ENCODE measurements at regions of chrX and their contacts with region 1.

Region 1: DNA sequence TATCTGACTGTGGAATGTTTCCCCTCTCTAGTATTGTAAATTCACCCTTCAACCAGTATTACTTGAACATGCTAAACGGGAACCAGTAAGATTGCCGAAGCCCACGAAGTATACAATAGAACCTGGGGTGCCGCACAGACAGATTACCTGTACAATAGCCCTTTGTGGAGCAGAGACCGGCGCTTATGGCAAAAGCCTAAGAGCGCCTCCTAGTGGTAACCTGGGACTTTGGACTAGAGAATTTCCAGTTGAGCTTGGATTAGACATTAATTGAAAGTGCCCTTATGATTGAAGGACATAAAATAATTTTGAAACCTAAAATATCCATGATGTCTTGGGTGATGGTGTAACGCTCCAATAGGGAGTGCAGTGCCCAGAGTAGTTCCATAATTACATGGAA is 14.1 kb downstream of the ZNF157 start:
- DNase-seq: peak; percentile 41 to 84 (median 69)
- ATAC-seq: peak; percentile 49
- H3K4me3 ChIP-seq: no peak overlapping the region
- H3K4me3 Mint-ChIP-seq: peak overlapping the region; percentile 35
- H3K27ac ChIP-seq: no peak overlapping the region
- H3K27ac Mint-ChIP-seq: peak overlapping the region; percentile 81
- H3K4me1 ChIP-seq: peaks cover 22% of the 10 kb centered on the region
- H3K4me1 Mint-ChIP-seq: peaks cover 23% of the 10 kb centered on the region
- H3K27me3 ChIP-seq: no peaks in the 10 kb centered on the region
- H3K27me3 Mint-ChIP-seq: no peaks in the 10 kb centered on the region
- CTCF ChIP-seq: peak; percentile 63

Region 2: DNA sequence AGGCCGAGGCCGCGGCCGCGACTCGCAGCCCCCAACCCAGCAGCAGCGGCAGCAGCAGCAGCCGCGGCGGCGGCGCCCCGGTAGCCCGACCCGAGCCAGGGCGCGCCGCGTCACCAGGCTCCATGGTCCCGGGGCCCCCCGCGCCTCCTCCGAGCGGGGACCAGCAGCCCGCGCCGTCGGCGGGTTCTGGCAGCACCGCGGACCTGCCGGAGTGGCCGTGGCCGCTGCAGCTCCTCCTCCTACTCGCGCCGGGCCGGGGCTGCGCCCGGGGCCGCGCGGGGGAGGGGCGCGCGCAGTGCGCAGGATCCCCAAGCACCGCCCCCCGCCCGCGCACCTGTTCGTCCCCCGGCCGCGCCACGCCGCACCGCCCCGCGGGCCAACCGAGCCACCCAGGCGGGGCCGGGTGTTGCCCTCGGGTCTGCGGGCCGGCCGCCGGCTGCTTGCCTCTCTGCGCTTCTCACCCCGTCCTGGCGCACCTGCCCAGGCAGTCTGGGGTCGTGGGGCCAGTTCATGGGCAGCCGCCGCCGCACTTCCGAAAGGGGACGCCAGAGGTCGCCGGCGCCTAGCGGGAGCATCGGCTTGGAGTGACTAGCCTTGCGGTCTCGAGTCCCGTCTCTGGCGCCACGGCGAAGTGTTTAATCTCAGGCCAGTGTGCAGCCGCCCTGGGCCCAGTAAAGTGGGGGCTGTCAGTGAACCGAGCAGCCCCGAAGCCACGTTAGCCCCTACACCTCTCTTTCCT is 625.4 kb before region 1 on chrX and contains the start of gene SLC9A7:
- CTCF ChIA-PET with region 1: no interaction called
- POLR2A ChIA-PET with region 1: no interaction called
- intact Hi-C with region 1: loop called in 1 of 2 experiments (anchors 5 kb)
- DNase-seq: peak; percentile 56 to 86 (median 76)
- ATAC-seq: peak; percentile 84
- H3K4me3 ChIP-seq: peak within 1 kb of the TSS; percentile 52 to 67
- H3K4me3 Mint-ChIP-seq: peak within 1 kb of the TSS; percentile 90
- H3K27ac ChIP-seq: no peak within 1 kb of the TSS
- H3K27ac Mint-ChIP-seq: peak within 1 kb of the TSS; percentile 69
- H3K4me1 ChIP-seq: peaks cover 14% of the 10 kb centered on the region
- H3K4me1 Mint-ChIP-seq: peaks cover 11% of the 10 kb centered on the region
- H3K27me3 ChIP-seq: no peaks in the 10 kb centered on the region
- H3K27me3 Mint-ChIP-seq: peaks cover 8% of the 10 kb centered on the region
- CTCF ChIP-seq: peak; percentile 63
- total RNA-seq, gene SLC9A7: 2.4 to 2.5 TPM

Region 3: GRCh38 chrX:47166126-47166525 is 218.4 kb before region 1 on chrX:
- CTCF ChIA-PET with region 1: no interaction called
- POLR2A ChIA-PET with region 1: no interaction called
- intact Hi-C with region 1: no loop called
- DNase-seq: peak in 1 of 9 experiments; percentile 9
- ATAC-seq: no peak
- H3K4me3 ChIP-seq: no peak overlapping the region
- H3K4me3 Mint-ChIP-seq: no peak overlapping the region
- H3K27ac ChIP-seq: no peak overlapping the region
- H3K27ac Mint-ChIP-seq: no peak overlapping the region
- H3K4me1 ChIP-seq: no peaks in the 10 kb centered on the region
- H3K4me1 Mint-ChIP-seq: peaks cover 2% of the 10 kb centered on the region
- H3K27me3 ChIP-seq: no peaks in the 10 kb centered on the region
- H3K27me3 Mint-ChIP-seq: no peaks in the 10 kb centered on the region
- CTCF ChIP-seq: no peak

Region 4: GRCh38 chrX:47217642-47218279 is 166.7 kb before region 1 on chrX:
- CTCF ChIA-PET with region 1: interaction called, 5 read pairs
- POLR2A ChIA-PET with region 1: no interaction called
- intact Hi-C with region 1: loop called (anchors 1 to 2 kb)
- DNase-seq: peak; percentile 83 to 98 (median 96)
- ATAC-seq: peak; percentile 80
- H3K4me3 ChIP-seq: peak overlapping the region; percentile 79
- H3K4me3 Mint-ChIP-seq: peak overlapping the region; percentile 93
- H3K27ac ChIP-seq: peak overlapping the region; percentile 98 to 100
- H3K27ac Mint-ChIP-seq: peak overlapping the region; percentile 98
- H3K4me1 ChIP-seq: peaks cover 26% of the 10 kb centered on the region
- H3K4me1 Mint-ChIP-seq: peaks cover 35% of the 10 kb centered on the region
- H3K27me3 ChIP-seq: no peaks in the 10 kb centered on the region
- H3K27me3 Mint-ChIP-seq: no peaks in the 10 kb centered on the region
- CTCF ChIP-seq: no peak

Region 5: GRCh38 chrX:47361538-47362511 is 22.7 kb before region 1 on chrX:
- CTCF ChIA-PET with region 1: interaction called, 4 read pairs
- POLR2A ChIA-PET with region 1: no interaction called
- intact Hi-C with region 1: loop called in 1 of 2 experiments (anchors 1 kb)
- DNase-seq: peak in 8 of 9 experiments; percentile 5 to 83 (median 28)
- ATAC-seq: peak; percentile 55
- H3K4me3 ChIP-seq: peak overlapping the region in 1 of 2 experiments; percentile 20
- H3K4me3 Mint-ChIP-seq: peak overlapping the region; percentile 58
- H3K27ac ChIP-seq: peak overlapping the region in 1 of 2 experiments; percentile 83
- H3K27ac Mint-ChIP-seq: peak overlapping the region; percentile 85
- H3K4me1 ChIP-seq: peaks cover 20% of the 10 kb centered on the region
- H3K4me1 Mint-ChIP-seq: peaks cover 33% of the 10 kb centered on the region
- H3K27me3 ChIP-seq: no peaks in the 10 kb centered on the region
- H3K27me3 Mint-ChIP-seq: no peaks in the 10 kb centered on the region
- CTCF ChIP-seq: no peak

Region 6: GRCh38 chrX:47523297-47523696 is 138.8 kb after region 1 on chrX:
- CTCF ChIA-PET with region 1: interaction called, 9 read pairs
- POLR2A ChIA-PET with region 1: interaction called, 4 read pairs
- intact Hi-C with region 1: loop called (anchors 1 to 5 kb)
- DNase-seq: peak; percentile 53 to 90 (median 78)
- ATAC-seq: peak; percentile 97
- H3K4me3 ChIP-seq: peak overlapping the region; percentile 47 to 49
- H3K4me3 Mint-ChIP-seq: peak overlapping the region; percentile 69
- H3K27ac ChIP-seq: no peak overlapping the region
- H3K27ac Mint-ChIP-seq: no peak overlapping the region
- H3K4me1 ChIP-seq: no peaks in the 10 kb centered on the region
- H3K4me1 Mint-ChIP-seq: peaks cover 5% of the 10 kb centered on the region
- H3K27me3 ChIP-seq: no peaks in the 10 kb centered on the region
- H3K27me3 Mint-ChIP-seq: no peaks in the 10 kb centered on the region
- CTCF ChIP-seq: peak; percentile 72